B cell (primary cell): ENCODE measurements at regions of chr17 and their contacts with region 1.

Region 1: GRCh38 chr17:27332485-27333409 is 38.8 kb downstream of the WSB1 start:
- DNase-seq: peak; percentile 92
- ATAC-seq: peak; percentile 83
- H3K4me3 ChIP-seq: peak overlapping the region; percentile 23 to 63 (median 55)
- H3K4me3 Mint-ChIP-seq: peak overlapping the region; percentile 85
- H3K27ac ChIP-seq: peak overlapping the region; percentile 38 to 59
- H3K27ac Mint-ChIP-seq: peak overlapping the region; percentile 92
- H3K4me1 ChIP-seq: peaks cover 11 to 13% of the 10 kb centered on the region in 2 donors
- H3K4me1 Mint-ChIP-seq: peaks cover 40% of the 10 kb centered on the region
- H3K27me3 ChIP-seq: no peaks in the 10 kb centered on the region
- H3K27me3 Mint-ChIP-seq: no peaks in the 10 kb centered on the region
- CTCF ChIP-seq: peak; percentile 80

Region 2: GRCh38 chr17:27199948-27200347 is 132.8 kb before region 1 on chr17:
- CTCF ChIA-PET with region 1: interaction called, 13 read pairs
- POLR2A ChIA-PET with region 1: no interaction called
- intact Hi-C with region 1: loop called (anchors 1 kb)
- DNase-seq: no peak
- ATAC-seq: no peak
- H3K4me3 ChIP-seq: no peak overlapping the region
- H3K4me3 Mint-ChIP-seq: no peak overlapping the region
- H3K27ac ChIP-seq: no peak overlapping the region
- H3K27ac Mint-ChIP-seq: no peak overlapping the region
- H3K4me1 ChIP-seq: no peaks in the 10 kb centered on the region
- H3K4me1 Mint-ChIP-seq: peaks cover 2% of the 10 kb centered on the region
- H3K27me3 ChIP-seq: no peaks in the 10 kb centered on the region
- H3K27me3 Mint-ChIP-seq: no peaks in the 10 kb centered on the region
- CTCF ChIP-seq: no peak

Region 3: DNA sequence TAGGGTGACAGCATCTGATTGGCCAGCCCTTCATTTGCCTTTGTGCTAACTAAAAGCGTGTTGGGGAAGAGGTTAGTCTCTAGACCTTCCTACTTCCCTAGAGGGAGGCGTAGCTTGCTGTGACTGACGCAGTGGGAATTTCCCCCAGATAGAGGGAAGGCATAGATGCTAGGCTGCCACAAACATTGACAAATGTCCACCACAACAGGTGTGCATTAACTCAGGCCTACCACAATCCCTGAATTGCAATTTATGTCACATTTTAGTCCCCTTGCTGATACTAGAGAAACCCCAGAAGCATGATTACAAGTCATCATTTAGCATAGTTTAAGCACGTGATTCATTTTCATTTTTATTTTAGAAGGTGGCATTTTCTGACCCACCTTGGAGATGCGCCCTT is 115.1 kb before region 1 on chr17:
- CTCF ChIA-PET with region 1: interaction called, 7 read pairs
- POLR2A ChIA-PET with region 1: no interaction called
- intact Hi-C with region 1: loop called (anchors 1 kb)
- DNase-seq: peak; percentile 94
- ATAC-seq: peak; percentile 85
- H3K4me3 ChIP-seq: peak overlapping the region in 1 of 5 experiments; percentile 9
- H3K4me3 Mint-ChIP-seq: peak overlapping the region; percentile 64
- H3K27ac ChIP-seq: peak overlapping the region; percentile 85 to 98
- H3K27ac Mint-ChIP-seq: peak overlapping the region; percentile 96
- H3K4me1 ChIP-seq: peaks cover 34 to 41% of the 10 kb centered on the region in 2 donors
- H3K4me1 Mint-ChIP-seq: peaks cover 48% of the 10 kb centered on the region
- H3K27me3 ChIP-seq: no peaks in the 10 kb centered on the region
- H3K27me3 Mint-ChIP-seq: no peaks in the 10 kb centered on the region
- CTCF ChIP-seq: no peak

Region 4: DNA sequence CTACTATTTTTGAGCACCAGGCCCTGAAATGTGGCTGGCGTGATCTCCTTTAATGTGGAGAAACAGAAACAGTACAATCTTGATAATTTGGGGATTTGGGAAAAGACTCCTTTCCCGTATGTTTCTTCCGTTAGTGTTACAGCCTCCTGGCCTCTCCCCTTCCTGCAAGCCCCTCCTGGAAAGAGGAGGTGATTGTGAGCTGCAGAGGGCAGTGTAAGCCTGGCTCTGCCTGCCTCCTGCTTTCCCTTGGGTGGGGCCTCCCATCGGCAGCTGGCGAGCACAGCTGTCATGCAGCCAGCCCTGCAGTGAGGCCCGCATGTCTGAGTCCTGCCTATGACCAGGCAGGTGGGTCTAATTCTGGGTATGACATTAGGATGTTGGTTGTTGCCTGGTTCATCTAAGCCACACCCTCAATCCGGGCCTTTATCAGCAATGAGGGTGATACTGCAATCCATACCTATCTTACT is 87.5 kb before region 1 on chr17:
- CTCF ChIA-PET with region 1: interaction called, 140 read pairs
- POLR2A ChIA-PET with region 1: interaction called, 5 read pairs
- intact Hi-C with region 1: loop called (anchors 1 kb)
- DNase-seq: peak; percentile 79
- ATAC-seq: peak; percentile 97
- H3K4me3 ChIP-seq: no peak overlapping the region
- H3K4me3 Mint-ChIP-seq: peak overlapping the region; percentile 33
- H3K27ac ChIP-seq: no peak overlapping the region
- H3K27ac Mint-ChIP-seq: peak overlapping the region; percentile 53
- H3K4me1 ChIP-seq: peaks cover 9 to 21% of the 10 kb centered on the region in 2 donors
- H3K4me1 Mint-ChIP-seq: peaks cover 27% of the 10 kb centered on the region
- H3K27me3 ChIP-seq: no peaks in the 10 kb centered on the region
- H3K27me3 Mint-ChIP-seq: no peaks in the 10 kb centered on the region
- CTCF ChIP-seq: peak; percentile 74

Region 5: GRCh38 chr17:27293898-27294688 is 38.7 kb before region 1 on chr17 and contains the start of gene WSB1:
- CTCF ChIA-PET with region 1: interaction called, 19 read pairs
- POLR2A ChIA-PET with region 1: interaction called, 10 read pairs
- intact Hi-C with region 1: loop called (anchors 1 kb)
- DNase-seq: peak; percentile 97
- ATAC-seq: peak; percentile 86
- H3K4me3 ChIP-seq: peak within 1 kb of the TSS; percentile 89 to 100 (median 96)
- H3K4me3 Mint-ChIP-seq: peak within 1 kb of the TSS; percentile 89
- H3K27ac ChIP-seq: peak within 1 kb of the TSS; percentile 99
- H3K27ac Mint-ChIP-seq: peak within 1 kb of the TSS; percentile 99
- H3K4me1 ChIP-seq: peaks cover 37 to 39% of the 10 kb centered on the region in 2 donors
- H3K4me1 Mint-ChIP-seq: peaks cover 45% of the 10 kb centered on the region
- H3K27me3 ChIP-seq: no peaks in the 10 kb centered on the region
- H3K27me3 Mint-ChIP-seq: no peaks in the 10 kb centered on the region
- CTCF ChIP-seq: no peak
- total RNA-seq, gene WSB1: 215 and 217 TPM in 2 replicates

Region 6: GRCh38 chr17:27345141-27345904 is 12.6 kb after region 1 on chr17:
- CTCF ChIA-PET with region 1: interaction called, 18 read pairs
- POLR2A ChIA-PET with region 1: interaction called, 4 read pairs
- intact Hi-C with region 1: loop called (anchors 1 kb)
- DNase-seq: no peak
- ATAC-seq: no peak
- H3K4me3 ChIP-seq: no peak overlapping the region
- H3K4me3 Mint-ChIP-seq: no peak overlapping the region
- H3K27ac ChIP-seq: no peak overlapping the region
- H3K27ac Mint-ChIP-seq: peak overlapping the region; percentile 60
- H3K4me1 ChIP-seq: peaks cover 11 to 12% of the 10 kb centered on the region in 2 donors
- H3K4me1 Mint-ChIP-seq: peaks cover 36% of the 10 kb centered on the region
- H3K27me3 ChIP-seq: peaks cover 0 to 6% (median 0%) of the 10 kb centered on the region in 4 experiments
- H3K27me3 Mint-ChIP-seq: peaks cover 3% of the 10 kb centered on the region
- CTCF ChIP-seq: no peak

Region 7: GRCh38 chr17:27473748-27474609 is 141.2 kb after region 1 on chr17:
- CTCF ChIA-PET with region 1: no interaction called
- POLR2A ChIA-PET with region 1: no interaction called
- intact Hi-C with region 1: no loop called
- DNase-seq: peak; percentile 71
- ATAC-seq: no peak
- H3K4me3 ChIP-seq: peak overlapping the region in 4 of 5 experiments; percentile 13 to 38 (median 20)
- H3K4me3 Mint-ChIP-seq: peak overlapping the region; percentile 81
- H3K27ac ChIP-seq: peak overlapping the region; percentile 80 to 89
- H3K27ac Mint-ChIP-seq: peak overlapping the region; percentile 92
- H3K4me1 ChIP-seq: peaks cover 35 to 63% of the 10 kb centered on the region in 2 donors
- H3K4me1 Mint-ChIP-seq: peaks cover 69% of the 10 kb centered on the region
- H3K27me3 ChIP-seq: no peaks in the 10 kb centered on the region
- H3K27me3 Mint-ChIP-seq: no peaks in the 10 kb centered on the region
- CTCF ChIP-seq: no peak

Region 8: DNA sequence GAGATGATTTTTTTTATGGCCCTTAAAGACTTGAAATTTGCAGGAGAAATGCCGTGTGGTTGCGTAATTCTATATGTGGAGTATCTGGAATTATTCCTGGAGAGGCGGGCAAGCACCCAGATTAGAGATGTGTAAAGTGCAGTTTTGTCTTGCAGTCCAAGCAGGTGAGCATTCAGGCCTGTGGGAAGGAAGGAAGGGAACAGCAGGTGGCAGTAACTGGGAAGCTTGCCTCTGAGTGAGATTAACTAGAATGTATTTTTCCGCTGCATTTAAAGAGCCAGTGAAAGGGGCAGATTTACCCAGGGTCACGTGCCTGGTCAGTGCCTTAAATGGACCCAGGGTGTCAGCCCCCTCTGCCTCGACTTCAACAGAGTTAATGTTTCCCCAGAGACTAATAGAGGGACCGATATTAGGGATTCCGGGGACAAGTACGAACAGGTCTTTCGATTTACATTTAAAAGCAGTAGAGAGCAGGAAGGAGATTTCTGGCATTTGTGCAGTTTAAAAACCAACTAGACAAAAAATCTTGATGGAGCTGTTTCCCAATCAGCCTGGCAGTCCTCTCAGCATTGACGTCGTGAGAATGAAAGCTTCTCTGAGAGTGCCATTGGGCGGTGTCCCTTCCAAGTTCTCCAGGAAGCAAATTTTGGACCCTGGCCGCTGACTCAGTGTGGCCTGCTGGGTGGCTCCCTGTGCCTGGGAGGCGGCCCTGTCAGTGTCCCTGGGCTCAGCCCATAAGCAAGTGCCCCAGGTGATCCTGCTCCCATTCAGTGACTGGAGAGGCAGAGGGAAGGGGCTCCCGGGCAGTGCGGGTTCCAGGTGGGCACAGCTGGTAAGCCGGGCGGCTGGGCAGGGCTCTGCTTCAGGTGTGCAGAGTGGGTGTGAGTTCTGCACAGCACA is 161.7 kb after region 1 on chr17:
- CTCF ChIA-PET with region 1: no interaction called
- POLR2A ChIA-PET with region 1: no interaction called
- intact Hi-C with region 1: no loop called
- DNase-seq: no peak
- ATAC-seq: no peak
- H3K4me3 ChIP-seq: no peak overlapping the region
- H3K4me3 Mint-ChIP-seq: no peak overlapping the region
- H3K27ac ChIP-seq: no peak overlapping the region
- H3K27ac Mint-ChIP-seq: peak overlapping the region; percentile 70
- H3K4me1 ChIP-seq: peaks cover 19 to 21% of the 10 kb centered on the region in 2 donors
- H3K4me1 Mint-ChIP-seq: peaks cover 31% of the 10 kb centered on the region
- H3K27me3 ChIP-seq: no peaks in the 10 kb centered on the region
- H3K27me3 Mint-ChIP-seq: no peaks in the 10 kb centered on the region
- CTCF ChIP-seq: no peak